ENCODE measurements at regions of chr11 and their contacts with region 1.

Region 1: DNA sequence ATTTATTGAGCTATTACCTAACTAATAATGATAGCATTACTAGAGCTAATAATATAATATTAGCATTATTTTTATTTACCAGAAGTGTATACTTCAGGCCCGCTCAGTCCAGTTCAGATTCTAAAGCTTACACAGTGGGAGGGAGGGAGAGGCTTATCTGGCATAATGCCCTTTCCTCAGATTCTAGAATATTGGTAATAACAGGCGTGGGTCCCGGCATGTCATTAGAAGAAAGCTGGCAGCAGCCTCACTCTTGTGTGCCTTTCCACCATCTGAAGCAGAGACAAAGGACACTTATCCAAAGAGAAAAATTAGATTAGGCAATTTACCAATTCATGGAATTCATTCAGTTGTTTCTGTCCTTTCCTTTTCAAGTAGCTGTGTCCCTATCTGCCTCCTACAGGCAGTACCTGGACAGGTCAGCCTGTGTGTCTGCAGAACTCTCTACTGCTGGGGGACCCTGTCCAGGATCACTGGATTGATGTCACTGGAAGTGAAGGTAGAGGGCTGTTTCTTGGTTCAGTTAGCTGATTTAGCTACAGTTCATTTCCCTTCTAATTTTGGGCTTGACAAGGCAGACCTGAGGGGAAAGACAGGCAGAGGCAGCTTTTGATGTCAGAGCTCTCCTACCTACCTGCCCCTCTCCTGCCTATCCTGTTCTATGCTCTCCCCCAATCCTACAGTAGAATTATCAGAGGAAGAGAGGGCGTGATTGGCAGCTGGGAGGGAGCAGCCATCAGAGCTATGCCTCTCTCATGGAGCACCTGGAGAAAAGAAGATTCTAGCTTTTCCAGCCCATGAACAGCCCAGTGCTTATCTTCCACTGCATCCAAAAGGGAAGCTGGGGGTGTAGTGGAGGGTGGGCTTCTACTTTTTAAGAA is 20.3 kb upstream of the CCDC90B start:
- DNase-seq: no peak
- H3K4me3 ChIP-seq: no peak overlapping the region
- H3K4me3 Mint-ChIP-seq: no peak overlapping the region
- H3K27ac ChIP-seq: no peak overlapping the region
- H3K27ac Mint-ChIP-seq: no peak overlapping the region
- H3K4me1 ChIP-seq: no peaks in the 10 kb centered on the region
- H3K4me1 Mint-ChIP-seq: no peaks in the 10 kb centered on the region
- H3K27me3 ChIP-seq: no peaks in the 10 kb centered on the region
- H3K27me3 Mint-ChIP-seq: peaks cover 4 to 5% of the 10 kb centered on the region in 2 donors

Region 2: GRCh38 chr11:83292709-83293456 is 13.6 kb before region 1 on chr11:
- CTCF ChIA-PET with region 1: interaction called, 23 read pairs
- POLR2A ChIA-PET with region 1: no interaction called
- intact Hi-C with region 1: no loop called
- DNase-seq: peak in 4 of 5 donors; percentile 26 to 45 (median 28)
- H3K4me3 ChIP-seq: no peak overlapping the region
- H3K4me3 Mint-ChIP-seq: peak overlapping the region in 6 of 8 donors; percentile 12 to 69 (median 44)
- H3K27ac ChIP-seq: no peak overlapping the region
- H3K27ac Mint-ChIP-seq: peak overlapping the region in 2 of 7 donors; percentile 35 to 41
- H3K4me1 ChIP-seq: no peaks in the 10 kb centered on the region
- H3K4me1 Mint-ChIP-seq: peaks cover 3 to 5% (median 4%) of the 10 kb centered on the region in 4 donors
- H3K27me3 ChIP-seq: no peaks in the 10 kb centered on the region
- H3K27me3 Mint-ChIP-seq: peaks cover 7 to 12% of the 10 kb centered on the region in 2 donors